Activated B cell treated with CpG ODN at 0.5 μM for 24 hours (primary cell): ENCODE measurements at regions of chr2 and their contacts with region 1.

Region 1: DNA sequence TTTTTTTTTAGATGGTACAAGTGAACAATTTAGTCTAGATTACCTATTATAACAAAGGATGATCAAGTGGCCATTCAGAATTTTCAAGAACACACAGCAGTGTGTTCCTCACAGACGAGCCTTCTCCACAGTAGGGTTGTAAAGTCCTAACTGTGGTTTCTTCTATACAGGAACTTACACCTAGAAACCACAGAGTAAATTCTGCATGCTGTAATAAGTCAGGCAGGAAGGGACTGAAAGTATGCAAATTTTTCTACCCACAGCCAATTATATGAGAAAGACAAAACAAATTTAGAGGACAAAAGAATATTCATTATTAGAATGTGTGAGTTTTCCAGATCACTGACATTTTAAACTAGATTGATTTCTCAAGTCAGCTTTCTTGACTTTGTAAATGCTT is 99.5 kb downstream of the RBMS1 start:
- DNase-seq: no peak
- ATAC-seq: peak; percentile 98
- H3K4me3 Mint-ChIP-seq: peak overlapping the region; percentile 66
- H3K27ac Mint-ChIP-seq: peak overlapping the region; percentile 79
- H3K4me1 Mint-ChIP-seq: peaks cover 62% of the 10 kb centered on the region
- H3K27me3 Mint-ChIP-seq: no peaks in the 10 kb centered on the region
- CTCF ChIP-seq: no peak

Region 2: DNA sequence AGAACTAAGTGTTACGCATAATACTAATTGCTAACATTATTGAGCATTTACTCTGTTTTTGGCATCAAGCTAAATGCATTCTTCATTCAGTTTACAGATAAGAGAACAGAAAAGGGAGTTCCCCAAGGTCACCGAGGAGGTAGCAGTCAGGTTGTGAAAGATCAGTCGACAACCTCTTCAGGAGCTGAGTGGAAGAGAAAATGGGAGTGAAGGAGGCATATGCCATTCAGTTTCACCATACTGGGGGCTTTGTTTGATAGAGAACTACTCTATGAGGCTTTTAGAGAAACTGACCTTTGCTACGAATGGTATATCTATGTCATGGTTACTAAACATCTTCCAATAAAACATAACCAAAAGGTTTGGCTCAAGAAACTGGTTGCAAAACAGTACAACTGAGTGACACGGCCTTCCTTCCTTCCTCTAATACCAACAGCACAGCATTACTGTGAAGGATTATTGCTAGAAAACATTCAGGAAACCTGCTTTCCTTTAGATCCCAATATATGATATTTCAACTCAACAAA is 12.7 kb before region 1 on chr2:
- CTCF ChIA-PET with region 1: no interaction called
- POLR2A ChIA-PET with region 1: interaction called, 5 read pairs
- intact Hi-C with region 1: loop called (anchors 2 kb)
- DNase-seq: no peak
- ATAC-seq: no peak
- H3K4me3 Mint-ChIP-seq: no peak overlapping the region
- H3K27ac Mint-ChIP-seq: peak overlapping the region; percentile 37
- H3K4me1 Mint-ChIP-seq: peaks cover 38% of the 10 kb centered on the region
- H3K27me3 Mint-ChIP-seq: no peaks in the 10 kb centered on the region
- CTCF ChIP-seq: no peak

Region 3: GRCh38 chr2:160994141-160995002 is 600.2 kb after region 1 on chr2:
- CTCF ChIA-PET with region 1: no interaction called
- POLR2A ChIA-PET with region 1: no interaction called
- intact Hi-C with region 1: no loop called
- DNase-seq: no peak
- ATAC-seq: peak; percentile 37
- H3K4me3 Mint-ChIP-seq: no peak overlapping the region
- H3K27ac Mint-ChIP-seq: no peak overlapping the region
- H3K4me1 Mint-ChIP-seq: peaks cover 3% of the 10 kb centered on the region
- H3K27me3 Mint-ChIP-seq: no peaks in the 10 kb centered on the region
- CTCF ChIP-seq: peak; percentile 38